ENCODE measurements at regions of chr11 and their contacts with region 1.

Region 1: GRCh38 chr11:57456960-57457642 is 3.2 kb upstream of the RTN4RL2 start:
- DNase-seq: peak; percentile 68
- H3K4me3 ChIP-seq: no peak overlapping the region
- H3K27ac ChIP-seq: no peak overlapping the region
- H3K4me1 ChIP-seq: peaks cover 20% of the 10 kb centered on the region
- H3K27me3 ChIP-seq: peaks cover 16% of the 10 kb centered on the region
- CTCF ChIP-seq: peak; percentile 94 to 99

Region 2: GRCh38 chr11:57426929-57427726 is 30.0 kb before region 1 on chr11 and contains the start of gene SLC43A3:
- CTCF ChIA-PET with region 1: no interaction called
- dilution Hi-C with region 1: no loop called
- in situ Hi-C with region 1: no loop called
- intact Hi-C with region 1: loop called (anchors 2 kb)
- DNase-seq: peak; percentile 93
- H3K4me3 ChIP-seq: peak within 1 kb of the TSS; percentile 37 to 58 (median 45)
- H3K27ac ChIP-seq: peak within 1 kb of the TSS; percentile 92
- H3K4me1 ChIP-seq: peaks cover 47% of the 10 kb centered on the region
- H3K27me3 ChIP-seq: no peaks in the 10 kb centered on the region
- CTCF ChIP-seq: no peak
- total RNA-seq, gene SLC43A3: 22.7 to 27.6 TPM

Region 3: DNA sequence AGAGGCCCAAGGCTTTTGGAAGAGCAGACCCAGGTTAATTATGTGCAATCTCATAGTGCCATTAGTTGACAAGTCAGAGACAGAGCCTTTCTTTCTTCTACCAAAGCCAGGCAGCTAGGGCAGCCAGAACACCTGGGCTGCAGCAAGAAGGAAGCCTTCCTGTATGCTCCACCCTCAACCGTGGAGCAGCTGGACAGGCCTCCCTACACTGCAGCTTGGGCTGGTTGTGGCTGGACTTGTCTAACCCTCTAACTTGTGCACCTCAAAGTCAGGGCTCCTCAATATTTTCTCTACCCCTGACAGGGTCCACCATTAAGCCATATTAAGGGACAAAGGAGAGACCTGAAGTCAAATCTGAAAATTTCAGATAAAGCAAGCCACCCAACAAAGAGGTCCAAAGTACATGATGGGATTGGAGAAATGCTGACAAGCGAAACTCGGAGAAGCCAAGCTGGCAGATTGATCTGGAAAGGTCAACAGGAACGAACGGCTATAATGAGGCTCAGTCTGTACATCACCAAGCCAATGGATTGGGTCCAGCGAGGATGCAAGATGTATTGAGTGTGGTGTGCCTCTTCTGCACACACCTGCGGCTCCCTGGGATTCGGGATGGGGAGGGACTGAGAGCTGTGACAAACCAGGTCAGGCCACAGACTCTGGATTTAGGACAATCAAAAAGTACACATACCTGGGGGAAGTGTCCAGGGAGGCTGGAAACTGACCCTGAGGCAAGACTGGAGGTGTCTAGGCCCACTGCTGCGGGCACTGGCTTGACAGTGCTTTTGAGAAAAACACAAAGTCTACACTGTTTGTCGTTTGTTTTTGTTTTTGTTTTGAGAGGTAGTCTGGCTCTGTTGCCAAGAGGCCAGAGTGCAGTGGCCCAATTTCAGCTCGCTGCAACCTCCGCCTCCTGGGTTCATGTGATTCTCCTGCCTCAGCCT is 18.5 kb before region 1 on chr11:
- CTCF ChIA-PET with region 1: no interaction called
- dilution Hi-C with region 1: no loop called
- in situ Hi-C with region 1: no loop called
- intact Hi-C with region 1: no loop called
- DNase-seq: no peak
- H3K4me3 ChIP-seq: no peak overlapping the region
- H3K27ac ChIP-seq: no peak overlapping the region
- H3K4me1 ChIP-seq: peaks cover 18% of the 10 kb centered on the region
- H3K27me3 ChIP-seq: no peaks in the 10 kb centered on the region
- CTCF ChIP-seq: no peak

Region 4: GRCh38 chr11:57480409-57481137 is 23.5 kb after region 1 on chr11:
- CTCF ChIA-PET with region 1: no interaction called
- dilution Hi-C with region 1: no loop called
- in situ Hi-C with region 1: no loop called
- intact Hi-C with region 1: loop called (anchors 1 kb)
- DNase-seq: peak; percentile 28
- H3K4me3 ChIP-seq: no peak overlapping the region
- H3K27ac ChIP-seq: no peak overlapping the region
- H3K4me1 ChIP-seq: peaks cover 19% of the 10 kb centered on the region
- H3K27me3 ChIP-seq: peaks cover 25% of the 10 kb centered on the region
- CTCF ChIP-seq: peak; percentile 72 to 79

Region 5: GRCh38 chr11:57493507-57494503 is 36.7 kb after region 1 on chr11:
- CTCF ChIA-PET with region 1: no interaction called
- dilution Hi-C with region 1: no loop called
- in situ Hi-C with region 1: no loop called
- intact Hi-C with region 1: loop called (anchors 5 kb)
- DNase-seq: peak; percentile 51
- H3K4me3 ChIP-seq: no peak overlapping the region
- H3K27ac ChIP-seq: no peak overlapping the region
- H3K4me1 ChIP-seq: no peaks in the 10 kb centered on the region
- H3K27me3 ChIP-seq: no peaks in the 10 kb centered on the region
- CTCF ChIP-seq: peak; percentile 91

Region 6: GRCh38 chr11:57530596-57531507 is 73.8 kb after region 1 on chr11 and contains the start of gene TIMM10:
- CTCF ChIA-PET with region 1: interaction called, 11 read pairs
- dilution Hi-C with region 1: no loop called
- in situ Hi-C with region 1: loop called in 1 of 2 experiments (anchors 10 kb)
- intact Hi-C with region 1: loop called (anchors 1 kb)
- DNase-seq: peak; percentile 99
- H3K4me3 ChIP-seq: peak within 1 kb of the TSS; percentile 55 to 77 (median 75)
- H3K27ac ChIP-seq: peak within 1 kb of the TSS; percentile 65
- H3K4me1 ChIP-seq: peaks cover 21% of the 10 kb centered on the region
- H3K27me3 ChIP-seq: no peaks in the 10 kb centered on the region
- CTCF ChIP-seq: no peak
- total RNA-seq, gene TIMM10: 24.8 to 58.9 TPM

Region 7: DNA sequence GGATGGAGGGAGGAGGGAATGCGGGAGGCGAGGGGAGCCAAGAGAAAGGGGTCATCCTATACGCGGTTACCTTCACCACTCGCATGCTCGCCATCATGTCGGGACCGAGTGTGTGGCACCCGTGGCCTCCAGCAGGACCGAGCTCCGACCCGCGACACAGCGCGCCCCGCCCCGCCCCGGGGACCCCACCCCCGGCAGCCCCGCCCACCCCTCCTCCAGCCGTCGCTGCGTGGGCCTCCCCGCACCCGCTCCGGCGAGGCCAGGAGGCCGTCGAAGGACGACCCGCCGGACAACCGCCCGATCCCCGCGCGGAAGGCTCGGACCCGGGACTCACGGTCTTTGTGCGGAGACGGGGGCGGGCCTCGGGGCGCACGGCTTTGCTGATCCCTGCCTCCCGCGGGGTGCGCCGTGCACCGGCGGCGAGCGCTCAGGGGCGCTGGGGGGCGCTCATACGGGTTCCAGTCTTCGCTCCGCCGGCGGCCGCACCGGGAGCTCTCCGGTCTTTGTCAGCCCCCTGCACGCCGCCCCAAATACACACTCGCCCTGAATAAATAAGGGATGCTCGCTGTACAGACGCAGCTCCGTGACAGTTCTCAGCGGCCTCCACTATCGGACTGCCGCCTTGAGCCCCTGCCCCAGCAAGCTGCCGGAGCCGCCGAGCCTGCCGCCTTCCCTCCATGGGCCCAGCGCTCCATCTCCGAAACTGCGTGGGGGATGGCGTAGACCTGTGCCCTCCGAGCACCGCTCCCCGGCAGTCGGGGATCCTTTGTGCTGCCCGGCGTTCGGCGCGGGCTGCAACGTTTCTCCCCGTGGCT is 110.6 kb after region 1 on chr11 and contains the start of gene UBE2L6:
- CTCF ChIA-PET with region 1: no interaction called
- dilution Hi-C with region 1: no loop called
- in situ Hi-C with region 1: no loop called
- intact Hi-C with region 1: loop called (anchors 1 kb)
- DNase-seq: no peak
- H3K4me3 ChIP-seq: peak within 1 kb of the TSS; percentile 77 to 96 (median 90)
- H3K27ac ChIP-seq: peak within 1 kb of the TSS; percentile 44
- H3K4me1 ChIP-seq: peaks cover 27% of the 10 kb centered on the region
- H3K27me3 ChIP-seq: no peaks in the 10 kb centered on the region
- CTCF ChIP-seq: no peak
- total RNA-seq, gene UBE2L6: 34.2 to 46.8 TPM

Region 8: GRCh38 chr11:57644748-57645688 is 187.9 kb after region 1 on chr11:
- CTCF ChIA-PET with region 1: interaction called, 4 read pairs
- dilution Hi-C with region 1: no loop called
- in situ Hi-C with region 1: loop called in 1 of 2 experiments (anchors 10 kb)
- intact Hi-C with region 1: loop called (anchors 1 kb)
- DNase-seq: no peak
- H3K4me3 ChIP-seq: no peak overlapping the region
- H3K27ac ChIP-seq: no peak overlapping the region
- H3K4me1 ChIP-seq: peaks cover 49% of the 10 kb centered on the region
- H3K27me3 ChIP-seq: no peaks in the 10 kb centered on the region
- CTCF ChIP-seq: peak; percentile 63 to 86